Activated naive CD4-positive, alpha-beta T cell treated with anti-CD3 and anti-CD28 coated beads for 36 hours (primary cell): ENCODE measurements at regions of chr5 and their contacts with region 1.

Region 1: GRCh38 chr5:112930082-112930344 is 8.0 kb upstream of the REEP5 start:
- DNase-seq: no peak
- H3K4me3 Mint-ChIP-seq: no peak overlapping the region
- H3K27ac Mint-ChIP-seq: no peak overlapping the region
- H3K4me1 Mint-ChIP-seq: peaks cover 39% of the 10 kb centered on the region
- H3K27me3 Mint-ChIP-seq: no peaks in the 10 kb centered on the region

Region 2: GRCh38 chr5:112958093-112959088 is 28.4 kb after region 1 on chr5:
- CTCF ChIA-PET with region 1: interaction called, 7 read pairs
- intact Hi-C with region 1: loop called (anchors 1 kb)
- DNase-seq: peak; percentile 47
- H3K4me3 Mint-ChIP-seq: no peak overlapping the region
- H3K27ac Mint-ChIP-seq: no peak overlapping the region
- H3K4me1 Mint-ChIP-seq: peaks cover 20% of the 10 kb centered on the region
- H3K27me3 Mint-ChIP-seq: no peaks in the 10 kb centered on the region

Region 3: GRCh38 chr5:113166852-113167366 is 236.9 kb after region 1 on chr5:
- CTCF ChIA-PET with region 1: no interaction called
- intact Hi-C with region 1: no loop called
- DNase-seq: no peak
- H3K4me3 Mint-ChIP-seq: no peak overlapping the region
- H3K27ac Mint-ChIP-seq: no peak overlapping the region
- H3K4me1 Mint-ChIP-seq: no peaks in the 10 kb centered on the region
- H3K27me3 Mint-ChIP-seq: peaks cover 10% of the 10 kb centered on the region

Region 4: DNA sequence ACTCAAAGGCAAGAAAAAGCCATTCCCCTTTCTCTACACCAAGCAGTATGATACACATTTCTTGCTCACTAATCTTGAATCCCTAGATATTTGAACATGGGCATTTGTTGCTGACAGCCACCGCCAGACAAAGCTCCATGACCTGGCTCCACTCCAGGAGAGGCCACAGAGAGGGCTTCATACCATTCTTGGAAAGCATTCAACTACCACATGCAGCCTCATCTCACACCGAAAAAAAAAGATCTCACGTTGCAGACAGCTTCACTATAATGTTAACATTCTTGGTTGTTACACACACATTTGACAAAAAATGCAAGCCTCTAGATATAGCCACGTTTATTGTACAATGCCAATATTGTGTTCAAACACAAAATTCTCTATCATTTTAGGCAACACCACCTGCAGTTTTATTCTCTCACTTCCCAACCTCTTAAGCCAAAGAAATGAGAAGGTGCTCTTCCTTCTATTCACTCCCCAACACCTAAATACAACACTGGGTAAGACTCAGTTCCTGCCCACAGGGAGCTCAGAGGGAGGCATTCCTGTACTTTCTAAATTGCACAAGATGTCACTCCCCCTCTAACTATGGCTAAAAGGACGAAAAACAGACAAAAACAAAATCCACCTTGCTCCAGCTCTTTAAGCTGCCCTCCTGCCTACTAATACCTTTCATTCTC is 282.4 kb after region 1 on chr5:
- CTCF ChIA-PET with region 1: no interaction called
- intact Hi-C with region 1: no loop called
- DNase-seq: no peak
- H3K4me3 Mint-ChIP-seq: no peak overlapping the region
- H3K27ac Mint-ChIP-seq: no peak overlapping the region
- H3K4me1 Mint-ChIP-seq: no peaks in the 10 kb centered on the region
- H3K27me3 Mint-ChIP-seq: no peaks in the 10 kb centered on the region